B cell (primary cell): ENCODE measurements at regions of chr2 and their contacts with region 1.

Region 1: GRCh38 chr2:17821535-17822444 is 5.5 kb downstream of the MSGN1 start:
- DNase-seq: no peak
- ATAC-seq: no peak
- H3K4me3 ChIP-seq: peak overlapping the region in 1 of 5 experiments; percentile 11
- H3K4me3 Mint-ChIP-seq: peak overlapping the region; percentile 72
- H3K27ac ChIP-seq: peak overlapping the region; percentile 63 to 79
- H3K27ac Mint-ChIP-seq: peak overlapping the region; percentile 78
- H3K4me1 ChIP-seq: peaks cover 46 to 49% of the 10 kb centered on the region in 2 donors
- H3K4me1 Mint-ChIP-seq: peaks cover 66% of the 10 kb centered on the region
- H3K27me3 ChIP-seq: no peaks in the 10 kb centered on the region
- H3K27me3 Mint-ChIP-seq: no peaks in the 10 kb centered on the region
- CTCF ChIP-seq: no peak

Region 2: GRCh38 chr2:17788773-17789172 is 33.0 kb before region 1 on chr2:
- CTCF ChIA-PET with region 1: interaction called, 3 read pairs
- POLR2A ChIA-PET with region 1: interaction called, 3 read pairs
- intact Hi-C with region 1: loop called (anchors 5 kb)
- DNase-seq: no peak
- ATAC-seq: no peak
- H3K4me3 ChIP-seq: no peak overlapping the region
- H3K4me3 Mint-ChIP-seq: no peak overlapping the region
- H3K27ac ChIP-seq: no peak overlapping the region
- H3K27ac Mint-ChIP-seq: no peak overlapping the region
- H3K4me1 ChIP-seq: peaks cover 2 to 13% of the 10 kb centered on the region in 2 donors
- H3K4me1 Mint-ChIP-seq: peaks cover 26% of the 10 kb centered on the region
- H3K27me3 ChIP-seq: no peaks in the 10 kb centered on the region
- H3K27me3 Mint-ChIP-seq: no peaks in the 10 kb centered on the region
- CTCF ChIP-seq: no peak

Region 3: GRCh38 chr2:17804358-17804757 is 17.4 kb before region 1 on chr2:
- CTCF ChIA-PET with region 1: interaction called, 16 read pairs
- POLR2A ChIA-PET with region 1: interaction called, 5 read pairs
- intact Hi-C with region 1: loop called (anchors 2 kb)
- DNase-seq: peak; percentile 78
- ATAC-seq: peak; percentile 83
- H3K4me3 ChIP-seq: peak overlapping the region in 2 of 5 experiments; percentile 31 to 34
- H3K4me3 Mint-ChIP-seq: peak overlapping the region; percentile 81
- H3K27ac ChIP-seq: peak overlapping the region; percentile 82 to 93
- H3K27ac Mint-ChIP-seq: peak overlapping the region; percentile 87
- H3K4me1 ChIP-seq: peaks cover 43 to 52% of the 10 kb centered on the region in 2 donors
- H3K4me1 Mint-ChIP-seq: peaks cover 70% of the 10 kb centered on the region
- H3K27me3 ChIP-seq: no peaks in the 10 kb centered on the region
- H3K27me3 Mint-ChIP-seq: no peaks in the 10 kb centered on the region
- CTCF ChIP-seq: no peak

Region 4: DNA sequence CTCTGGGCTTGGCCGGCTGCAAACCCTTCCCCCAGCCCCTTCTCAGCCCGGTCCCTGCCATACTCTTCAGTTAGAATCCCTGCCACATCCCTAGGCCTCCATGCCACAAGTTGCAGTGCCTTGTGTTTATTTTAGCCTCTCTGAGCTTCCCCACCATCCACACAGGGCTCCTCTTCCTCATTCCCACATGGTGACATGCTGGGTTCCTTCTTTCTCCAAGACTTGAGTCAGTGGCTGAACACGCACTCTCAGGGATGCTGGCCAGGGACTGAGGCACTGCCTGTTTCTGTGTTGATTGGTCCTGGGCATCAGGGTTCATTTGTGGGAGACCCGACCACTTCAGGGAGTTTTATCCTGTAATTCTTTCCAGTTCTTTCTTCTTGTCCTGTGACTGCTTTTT is 112.9 kb after region 1 on chr2:
- CTCF ChIA-PET with region 1: no interaction called
- POLR2A ChIA-PET with region 1: no interaction called
- intact Hi-C with region 1: no loop called
- DNase-seq: no peak
- ATAC-seq: no peak
- H3K4me3 ChIP-seq: no peak overlapping the region
- H3K4me3 Mint-ChIP-seq: no peak overlapping the region
- H3K27ac ChIP-seq: no peak overlapping the region
- H3K27ac Mint-ChIP-seq: no peak overlapping the region
- H3K4me1 ChIP-seq: no peaks in the 10 kb centered on the region
- H3K4me1 Mint-ChIP-seq: no peaks in the 10 kb centered on the region
- H3K27me3 ChIP-seq: peaks cover 0 to 5% (median 0%) of the 10 kb centered on the region in 4 experiments
- H3K27me3 Mint-ChIP-seq: peaks cover 19% of the 10 kb centered on the region
- CTCF ChIP-seq: no peak